ENCODE measurements at regions of chr5 and their contacts with region 1.

Region 1: GRCh38 chr5:34499001-34499734 is 157.0 kb upstream of the RAI14 start:
- DNase-seq: peak; percentile 24
- H3K4me3 Mint-ChIP-seq: no peak overlapping the region
- H3K27ac Mint-ChIP-seq: peak overlapping the region; percentile 0
- H3K4me1 Mint-ChIP-seq: peaks cover 13% of the 10 kb centered on the region
- H3K27me3 Mint-ChIP-seq: peaks cover 3% of the 10 kb centered on the region

Region 2: GRCh38 chr5:34474573-34475021 is 24.6 kb before region 1 on chr5:
- CTCF ChIA-PET with region 1: no interaction called
- POLR2A ChIA-PET with region 1: no interaction called
- DNase-seq: no peak
- H3K4me3 Mint-ChIP-seq: no peak overlapping the region
- H3K27ac Mint-ChIP-seq: no peak overlapping the region
- H3K4me1 Mint-ChIP-seq: no peaks in the 10 kb centered on the region
- H3K27me3 Mint-ChIP-seq: peaks cover 12% of the 10 kb centered on the region

Region 3: GRCh38 chr5:34486160-34486848 is 12.9 kb before region 1 on chr5:
- CTCF ChIA-PET with region 1: interaction called, 11 read pairs
- POLR2A ChIA-PET with region 1: no interaction called
- DNase-seq: peak; percentile 64
- H3K4me3 Mint-ChIP-seq: no peak overlapping the region
- H3K27ac Mint-ChIP-seq: no peak overlapping the region
- H3K4me1 Mint-ChIP-seq: no peaks in the 10 kb centered on the region
- H3K27me3 Mint-ChIP-seq: peaks cover 38% of the 10 kb centered on the region